ENCODE measurements at regions of chr9 and their contacts with region 1.

Region 1: DNA sequence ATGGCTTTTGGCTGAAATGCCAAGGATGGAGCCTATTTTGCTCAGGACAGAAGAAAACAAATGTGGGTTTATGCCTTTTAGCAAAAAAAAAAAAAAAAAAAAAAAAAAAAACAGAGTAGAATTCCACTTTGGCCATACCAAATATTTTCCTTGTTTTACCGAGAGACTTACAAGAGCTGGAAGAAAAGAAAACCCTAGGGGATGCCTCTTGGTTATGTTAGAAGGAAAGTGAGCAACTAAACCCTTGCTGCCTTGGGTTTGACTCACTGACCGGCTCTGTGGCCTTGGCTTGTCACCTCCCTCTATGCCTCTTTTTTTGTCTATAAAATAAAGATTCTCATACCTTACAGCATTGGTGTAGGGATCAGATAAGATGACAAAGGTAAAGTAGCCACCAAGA is 69.6 kb upstream of the ABCA1 start:
- DNase-seq: no peak
- H3K4me3 ChIP-seq: no peak overlapping the region
- H3K27ac ChIP-seq: no peak overlapping the region
- H3K4me1 ChIP-seq: no peaks in the 10 kb centered on the region
- CTCF ChIP-seq: no peak

Region 2: GRCh38 chr9:105021917-105022316 is 24.4 kb after region 1 on chr9:
- CTCF ChIA-PET with region 1: no interaction called
- POLR2A ChIA-PET with region 1: interaction called, 12 read pairs
- intact Hi-C with region 1: no loop called
- DNase-seq: no peak
- H3K4me3 ChIP-seq: no peak overlapping the region
- H3K27ac ChIP-seq: no peak overlapping the region
- H3K4me1 ChIP-seq: no peaks in the 10 kb centered on the region
- CTCF ChIP-seq: no peak